RWPE1 (cell line): ENCODE measurements at regions of chr6 and their contacts with region 1.

Region 1: DNA sequence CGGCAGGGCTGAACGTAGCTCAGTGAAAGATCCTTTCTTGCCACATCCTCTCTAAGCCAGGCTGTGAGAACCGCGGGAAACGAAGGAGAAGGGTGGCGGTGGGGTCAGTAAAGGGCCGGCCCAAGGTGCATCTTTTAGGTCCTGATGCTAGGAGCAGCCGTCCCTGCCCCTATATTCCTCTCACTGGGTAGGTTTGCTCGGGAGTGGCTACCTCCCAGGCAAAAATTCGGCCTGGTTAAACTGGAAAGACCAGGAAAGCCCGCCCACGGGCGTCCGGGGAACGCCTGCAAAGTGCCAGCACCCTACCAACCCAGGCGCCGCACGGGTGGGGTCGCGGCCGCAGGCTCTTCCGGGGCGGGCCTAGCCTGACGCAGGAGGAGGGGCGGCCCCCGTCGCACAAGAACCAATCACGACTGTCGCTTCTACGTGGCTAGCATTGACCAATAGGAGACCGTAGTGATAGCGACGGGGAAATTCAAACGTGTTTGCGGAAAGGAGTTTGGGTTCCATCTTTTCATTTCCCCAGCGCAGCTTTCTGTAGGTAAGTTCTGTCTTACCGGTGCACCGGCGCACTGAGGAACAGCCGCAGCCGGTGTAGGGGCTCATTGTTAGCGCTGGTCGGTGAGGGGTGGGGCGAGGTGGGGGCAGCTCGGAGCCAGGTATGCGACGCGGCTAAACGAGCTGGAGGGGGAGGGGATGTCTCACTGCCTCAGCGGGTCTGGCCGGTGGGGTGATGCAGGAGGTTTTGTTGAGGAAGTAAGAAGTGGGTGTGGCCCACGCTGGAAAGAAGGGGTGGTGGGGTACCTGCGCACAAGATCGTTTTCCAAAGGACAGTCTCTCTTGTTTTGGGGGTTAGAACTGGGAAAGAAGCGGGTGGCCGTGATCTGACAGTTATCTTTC is at the start of gene TTK:
- DNase-seq: peak; percentile 94
- H3K27ac ChIP-seq: peak within 1 kb of the TSS; percentile 91
- CTCF ChIP-seq: no peak

Region 2: DNA sequence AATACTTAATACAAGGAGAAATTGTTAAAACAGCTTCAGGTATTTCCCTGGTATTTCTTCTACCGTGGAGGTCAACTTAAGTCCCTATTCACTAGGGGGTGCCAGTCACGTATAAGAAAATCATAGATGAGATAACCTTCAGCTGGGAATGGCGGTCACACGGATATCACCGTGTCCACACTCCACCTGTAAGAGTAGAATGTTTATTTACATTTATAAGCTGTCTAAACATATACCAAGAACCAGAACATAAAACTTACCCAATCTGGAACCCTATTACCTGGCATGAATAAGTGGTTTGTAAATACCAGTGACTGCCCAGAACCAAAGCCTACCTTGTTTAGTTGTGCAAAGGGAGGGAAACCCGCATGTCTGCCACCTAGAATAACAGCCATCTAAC is 55.2 kb before region 1 on chr6:
- CTCF ChIA-PET with region 1: interaction called, 11 read pairs
- POLR2A ChIA-PET with region 1: no interaction called
- DNase-seq: peak; percentile 28
- H3K27ac ChIP-seq: no peak overlapping the region
- CTCF ChIP-seq: peak; percentile 36

Region 3: DNA sequence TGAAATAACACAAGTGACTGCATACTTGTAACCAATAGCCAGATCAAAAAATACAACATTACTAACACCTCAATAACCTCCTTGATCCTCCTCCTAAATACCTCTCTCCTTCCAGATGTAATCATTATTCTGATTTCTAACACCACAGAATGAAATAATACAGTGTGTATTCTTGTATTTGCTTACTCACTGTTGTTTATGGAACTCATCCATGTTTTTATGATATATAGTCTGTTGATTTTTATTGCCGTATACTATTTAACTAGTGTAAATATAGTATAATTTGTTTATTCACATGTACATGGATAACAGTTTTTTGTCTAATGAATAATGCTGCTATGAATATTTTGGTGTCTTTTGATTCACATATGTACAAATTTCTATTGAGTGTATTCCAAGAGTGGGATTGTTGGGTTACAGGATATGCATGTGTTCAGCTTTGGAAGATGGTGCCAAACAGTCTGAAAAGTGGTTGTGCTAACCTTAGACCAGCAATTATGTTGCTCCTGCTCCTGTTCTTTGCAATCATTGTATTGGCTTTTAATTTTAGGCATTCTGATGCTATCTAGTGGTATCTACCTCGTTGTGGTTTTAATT is 11.5 kb after region 1 on chr6:
- CTCF ChIA-PET with region 1: no interaction called
- POLR2A ChIA-PET with region 1: no interaction called
- DNase-seq: no peak
- H3K27ac ChIP-seq: no peak overlapping the region
- CTCF ChIP-seq: no peak